Activated CD4-positive, alpha-beta T cell treated with anti-CD3 and anti-CD28 coated beads for 36 hours (primary cell): ENCODE measurements at regions of chr9 and their contacts with region 1.

Region 1: DNA sequence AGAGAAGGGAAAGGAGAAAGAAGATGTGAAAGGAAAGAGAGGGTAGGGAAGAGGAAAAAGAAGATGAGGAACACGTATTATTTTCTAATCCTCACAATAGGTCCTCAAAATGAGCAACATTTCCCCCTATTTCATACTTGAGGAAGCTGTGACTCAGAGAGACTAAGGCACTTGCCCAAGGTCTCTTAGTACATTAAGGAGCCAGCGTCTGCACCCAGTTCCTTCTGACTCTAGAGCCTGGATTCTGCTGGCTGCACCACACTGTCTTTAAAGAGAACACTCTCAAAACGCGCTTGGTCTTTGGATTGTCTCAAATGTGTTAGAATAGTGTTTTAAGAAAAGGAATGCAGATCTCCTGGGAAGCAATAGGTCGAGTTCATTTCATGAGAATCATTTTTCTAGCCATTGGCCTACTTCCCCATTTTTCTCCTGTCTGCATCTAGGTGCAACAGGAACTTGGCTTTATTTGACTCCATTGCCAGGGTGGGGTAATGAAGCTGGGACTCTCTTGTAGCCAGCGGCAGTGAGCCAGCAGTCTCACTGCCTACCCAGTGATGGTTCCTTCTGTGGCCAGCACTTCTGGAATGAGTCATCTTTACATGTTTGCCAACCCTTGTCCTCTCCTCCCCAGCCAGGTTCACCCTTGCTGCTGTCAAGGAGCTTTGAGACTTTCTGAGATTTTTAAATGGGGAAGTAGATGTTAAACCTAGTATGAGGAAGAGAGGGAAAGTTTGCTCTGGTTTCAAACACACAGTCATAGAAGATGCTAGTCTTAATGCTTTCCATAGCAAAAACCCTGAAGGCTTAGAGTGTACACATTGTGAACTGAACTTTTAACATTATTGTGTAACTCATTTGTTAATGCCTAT is 82.7 kb downstream of the DOCK8 start:
- DNase-seq: peak; percentile 43
- ATAC-seq: peak; percentile 89
- H3K4me3 Mint-ChIP-seq: no peak overlapping the region
- H3K27ac Mint-ChIP-seq: peak overlapping the region; percentile 82
- H3K4me1 Mint-ChIP-seq: peaks cover 40% of the 10 kb centered on the region
- H3K27me3 Mint-ChIP-seq: no peaks in the 10 kb centered on the region

Region 2: DNA sequence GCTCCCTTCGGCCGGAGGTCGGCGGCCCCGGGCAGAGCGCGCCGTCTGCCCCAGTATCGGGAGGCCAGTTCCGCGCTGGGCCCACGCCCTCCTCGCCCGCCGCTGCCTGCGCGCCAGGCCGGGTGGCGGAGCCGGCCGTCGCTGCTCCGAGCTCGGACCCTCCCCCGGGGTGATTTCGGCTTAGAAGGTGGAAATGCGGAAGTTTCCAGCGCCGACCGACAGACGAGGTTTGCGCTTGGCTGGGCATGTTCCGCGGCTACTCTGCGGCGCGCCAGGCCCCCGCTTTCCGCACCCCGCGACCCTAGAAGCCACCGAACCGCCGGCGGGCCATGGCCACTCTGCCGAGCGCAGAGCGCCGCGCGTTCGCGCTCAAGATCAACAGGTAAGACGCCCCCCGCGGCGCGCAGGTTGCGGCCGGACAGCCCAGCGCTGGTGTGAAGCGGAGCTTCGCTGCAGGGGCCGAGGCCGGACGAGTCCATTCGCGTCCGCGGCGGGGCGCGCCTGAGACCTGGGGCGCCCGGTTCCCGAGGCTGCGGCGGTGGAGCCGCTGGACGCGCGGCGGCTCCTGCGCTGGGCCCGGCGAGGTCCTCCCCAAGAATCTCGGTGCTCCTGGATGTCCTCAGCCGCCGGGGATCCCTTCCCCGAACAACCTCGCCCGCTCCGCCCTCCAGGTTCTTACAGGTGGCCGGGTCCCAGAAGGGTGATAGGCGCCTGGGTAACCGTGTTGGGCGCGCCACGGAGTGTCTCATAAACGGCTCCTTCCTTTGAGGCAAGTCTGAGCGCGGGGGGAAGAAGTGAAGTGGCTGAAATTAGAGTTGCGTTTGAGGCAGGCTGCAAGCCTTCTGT is 82.5 kb before region 1 on chr9 and contains the start of gene DOCK8:
- CTCF ChIA-PET with region 1: interaction called, 3 read pairs
- POLR2A ChIA-PET with region 1: no interaction called
- intact Hi-C with region 1: loop called in 1 of 2 experiments (anchors 5 kb)
- DNase-seq: peak; percentile 75
- ATAC-seq: peak; percentile 84
- H3K4me3 Mint-ChIP-seq: peak within 1 kb of the TSS; percentile 72
- H3K27ac Mint-ChIP-seq: peak within 1 kb of the TSS; percentile 21
- H3K4me1 Mint-ChIP-seq: peaks cover 4% of the 10 kb centered on the region
- H3K27me3 Mint-ChIP-seq: peaks cover 13% of the 10 kb centered on the region
- total RNA-seq, gene DOCK8: 100 to 125 TPM

Region 3: GRCh38 chr9:281741-282645 is 15.3 kb before region 1 on chr9:
- CTCF ChIA-PET with region 1: interaction called, 7 read pairs
- POLR2A ChIA-PET with region 1: no interaction called
- intact Hi-C with region 1: loop called in 1 of 2 experiments (anchors 1 kb)
- DNase-seq: peak; percentile 53
- ATAC-seq: peak; percentile 55
- H3K4me3 Mint-ChIP-seq: peak overlapping the region; percentile 67
- H3K27ac Mint-ChIP-seq: peak overlapping the region; percentile 95
- H3K4me1 Mint-ChIP-seq: peaks cover 50% of the 10 kb centered on the region
- H3K27me3 Mint-ChIP-seq: no peaks in the 10 kb centered on the region

Region 4: GRCh38 chr9:341634-342421 is 44.5 kb after region 1 on chr9:
- CTCF ChIA-PET with region 1: no interaction called
- POLR2A ChIA-PET with region 1: no interaction called
- intact Hi-C with region 1: no loop called
- DNase-seq: no peak
- ATAC-seq: no peak
- H3K4me3 Mint-ChIP-seq: no peak overlapping the region
- H3K27ac Mint-ChIP-seq: no peak overlapping the region
- H3K4me1 Mint-ChIP-seq: no peaks in the 10 kb centered on the region
- H3K27me3 Mint-ChIP-seq: no peaks in the 10 kb centered on the region